ENCODE measurements at regions of chr20 and their contacts with region 1.

Region 1: DNA sequence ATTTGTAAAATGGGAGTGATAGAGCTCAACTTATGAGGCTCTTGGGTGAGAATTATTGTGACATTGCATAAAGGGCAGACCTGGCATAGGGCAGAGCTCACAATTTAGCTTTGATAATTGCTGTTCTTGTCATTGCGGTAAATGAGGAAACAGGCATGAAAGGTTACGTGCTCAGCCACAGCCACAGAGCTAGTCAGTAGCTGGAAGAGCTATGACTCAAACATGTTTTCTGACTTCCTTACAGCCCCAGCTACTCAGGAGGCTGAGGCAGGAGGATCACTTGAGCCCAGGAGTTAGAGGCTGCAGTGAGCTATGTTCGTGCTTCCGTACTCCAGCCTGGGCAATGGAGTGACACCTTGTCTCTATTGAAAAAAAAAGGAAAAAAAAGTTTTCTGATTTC is 3.5 kb upstream of the GHRH start:
- DNase-seq: no peak
- ATAC-seq: peak; percentile 89
- H3K4me3 Mint-ChIP-seq: no peak overlapping the region
- H3K27ac Mint-ChIP-seq: no peak overlapping the region
- H3K4me1 Mint-ChIP-seq: peaks cover 13% of the 10 kb centered on the region
- H3K27me3 Mint-ChIP-seq: peaks cover 5% of the 10 kb centered on the region
- CTCF ChIP-seq: no peak

Region 2: GRCh38 chr20:37202267-37202943 is 62.7 kb before region 1 on chr20:
- CTCF ChIA-PET with region 1: no interaction called
- POLR2A ChIA-PET with region 1: no interaction called
- intact Hi-C with region 1: loop called (anchors 1 kb)
- DNase-seq: no peak
- ATAC-seq: no peak
- H3K4me3 Mint-ChIP-seq: no peak overlapping the region
- H3K27ac Mint-ChIP-seq: no peak overlapping the region
- H3K4me1 Mint-ChIP-seq: no peaks in the 10 kb centered on the region
- H3K27me3 Mint-ChIP-seq: no peaks in the 10 kb centered on the region
- CTCF ChIP-seq: peak; percentile 66

Region 3: GRCh38 chr20:37288091-37288490 is 22.9 kb after region 1 on chr20:
- CTCF ChIA-PET with region 1: interaction called, 9 read pairs
- POLR2A ChIA-PET with region 1: interaction called, 20 read pairs
- intact Hi-C with region 1: no loop called
- DNase-seq: no peak
- ATAC-seq: no peak
- H3K4me3 Mint-ChIP-seq: no peak overlapping the region
- H3K27ac Mint-ChIP-seq: no peak overlapping the region
- H3K4me1 Mint-ChIP-seq: peaks cover 35% of the 10 kb centered on the region
- H3K27me3 Mint-ChIP-seq: no peaks in the 10 kb centered on the region
- CTCF ChIP-seq: no peak

Region 4: DNA sequence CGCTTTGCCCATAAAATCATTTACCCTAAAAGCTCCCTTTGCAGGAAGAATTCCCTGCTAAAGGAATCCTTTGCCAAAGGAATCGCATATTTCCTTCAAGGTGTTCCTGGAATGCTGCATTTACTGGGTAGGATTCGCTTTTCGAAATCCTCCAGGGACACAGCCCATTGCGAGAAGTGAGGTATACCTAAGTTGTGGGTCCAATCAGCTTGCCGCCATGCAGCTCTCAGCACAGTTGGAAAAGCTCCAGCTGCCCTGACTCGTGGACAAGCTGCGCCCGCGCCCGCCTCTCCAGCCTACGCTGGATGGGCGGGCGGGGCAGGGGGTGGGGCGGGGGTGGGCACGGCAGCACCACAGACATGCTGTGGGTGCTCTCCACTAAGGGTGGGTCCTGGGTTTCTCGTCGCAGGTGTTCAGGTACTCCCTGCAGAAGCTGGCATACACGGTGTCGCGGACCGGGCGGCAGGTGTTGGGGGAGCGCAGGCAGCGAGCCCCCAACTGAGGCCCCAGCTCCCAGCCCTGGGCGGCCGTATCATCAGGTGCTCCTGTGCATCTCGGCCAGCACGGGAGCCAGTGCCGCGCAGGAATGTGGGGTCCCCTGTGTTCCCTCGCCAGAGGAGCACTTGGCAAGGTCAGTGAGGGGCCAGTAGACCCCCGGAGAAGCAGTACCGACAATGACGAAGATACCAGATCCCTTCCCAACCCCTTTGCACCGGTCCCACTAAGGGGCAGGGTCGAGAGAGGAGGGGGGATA is 257.3 kb after region 1 on chr20:
- CTCF ChIA-PET with region 1: no interaction called
- POLR2A ChIA-PET with region 1: no interaction called
- intact Hi-C with region 1: no loop called
- DNase-seq: peak; percentile 4
- ATAC-seq: no peak
- H3K4me3 Mint-ChIP-seq: no peak overlapping the region
- H3K27ac Mint-ChIP-seq: no peak overlapping the region
- H3K4me1 Mint-ChIP-seq: peaks cover 67% of the 10 kb centered on the region
- H3K27me3 Mint-ChIP-seq: no peaks in the 10 kb centered on the region
- CTCF ChIP-seq: no peak